T-cell (primary cell): ENCODE measurements at regions of chr13 and their contacts with region 1.

Region 1: DNA sequence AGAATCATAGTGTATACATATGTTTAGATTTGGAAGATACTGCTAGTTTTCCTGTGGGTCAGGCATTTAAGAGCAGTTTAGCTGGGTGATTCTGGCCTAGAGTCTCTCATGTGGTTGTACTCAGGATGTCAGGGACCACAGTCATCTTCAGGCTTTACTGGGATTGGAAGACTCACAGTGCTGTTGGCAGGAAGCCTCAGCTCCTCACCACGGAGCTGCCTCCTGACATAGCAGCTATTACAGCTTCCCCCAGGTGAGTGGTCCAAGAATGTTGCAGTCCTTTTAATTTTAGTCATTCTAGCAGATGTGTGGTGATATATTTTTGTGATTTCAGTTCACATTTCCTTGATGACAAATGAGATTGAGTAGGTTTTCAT is 16.9 kb upstream of the GPR18 start:
- DNase-seq: peak in 24 of 35 experiments; percentile 11 to 69 (median 32)
- ATAC-seq: peak; percentile 75 to 84 (median 82)
- H3K4me3 ChIP-seq: no peak overlapping the region
- H3K4me3 Mint-ChIP-seq: peak overlapping the region in 2 of 3 donors; percentile 22 to 61
- H3K27ac ChIP-seq: peak overlapping the region; percentile 87
- H3K27ac Mint-ChIP-seq: peak overlapping the region; percentile 89 to 92
- H3K4me1 ChIP-seq: peaks cover 38 to 68% of the 10 kb centered on the region in 2 experiments
- H3K4me1 Mint-ChIP-seq: peaks cover 94 to 96% (median 94%) of the 10 kb centered on the region in 3 donors
- H3K27me3 ChIP-seq: no peaks in the 10 kb centered on the region
- H3K27me3 Mint-ChIP-seq: no peaks in the 10 kb centered on the region

Region 2: DNA sequence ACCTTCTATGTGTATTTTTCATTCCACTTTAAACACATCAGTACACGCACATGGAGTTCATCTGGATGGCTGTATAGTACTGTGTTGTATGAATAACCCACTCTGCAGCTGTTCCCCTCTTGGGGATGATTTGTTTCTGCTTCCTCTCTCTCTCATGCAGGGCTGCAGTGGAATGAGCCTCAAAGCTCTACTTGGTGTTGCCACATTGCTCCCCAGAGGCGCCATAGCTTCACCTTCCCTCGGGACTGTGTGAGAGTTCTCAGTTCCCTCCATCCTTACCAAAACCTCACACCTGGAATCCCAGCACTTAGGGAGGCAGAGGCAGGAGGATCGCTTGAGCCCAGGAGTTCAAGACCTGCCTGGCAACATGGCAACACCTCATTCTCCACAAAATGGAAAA is 60.5 kb after region 1 on chr13:
- CTCF ChIA-PET with region 1: interaction called, 4 to 13 read pairs
- POLR2A ChIA-PET with region 1: interaction called in 1 of 2 experiments, 4 read pairs
- DNase-seq: no peak
- ATAC-seq: no peak
- H3K4me3 ChIP-seq: no peak overlapping the region
- H3K4me3 Mint-ChIP-seq: no peak overlapping the region
- H3K27ac ChIP-seq: no peak overlapping the region
- H3K27ac Mint-ChIP-seq: peak overlapping the region; percentile 74 to 87
- H3K4me1 ChIP-seq: peaks cover 23 to 24% of the 10 kb centered on the region in 2 experiments
- H3K4me1 Mint-ChIP-seq: peaks cover 71 to 81% (median 78%) of the 10 kb centered on the region in 3 donors
- H3K27me3 ChIP-seq: no peaks in the 10 kb centered on the region
- H3K27me3 Mint-ChIP-seq: no peaks in the 10 kb centered on the region

Region 3: GRCh38 chr13:101082481-101082880 is 1807.4 kb after region 1 on chr13:
- CTCF ChIA-PET with region 1: no interaction called
- POLR2A ChIA-PET with region 1: no interaction called
- DNase-seq: no peak
- ATAC-seq: no peak
- H3K4me3 ChIP-seq: no peak overlapping the region
- H3K4me3 Mint-ChIP-seq: no peak overlapping the region
- H3K27ac ChIP-seq: no peak overlapping the region
- H3K27ac Mint-ChIP-seq: no peak overlapping the region
- H3K4me1 ChIP-seq: no peaks in the 10 kb centered on the region
- H3K4me1 Mint-ChIP-seq: no peaks in the 10 kb centered on the region
- H3K27me3 ChIP-seq: peaks cover 0 to 3% of the 10 kb centered on the region in 2 experiments
- H3K27me3 Mint-ChIP-seq: peaks cover 2 to 14% of the 10 kb centered on the region in 2 donors